ENCODE measurements at regions of chr7 and their contacts with region 1.

Region 1: DNA sequence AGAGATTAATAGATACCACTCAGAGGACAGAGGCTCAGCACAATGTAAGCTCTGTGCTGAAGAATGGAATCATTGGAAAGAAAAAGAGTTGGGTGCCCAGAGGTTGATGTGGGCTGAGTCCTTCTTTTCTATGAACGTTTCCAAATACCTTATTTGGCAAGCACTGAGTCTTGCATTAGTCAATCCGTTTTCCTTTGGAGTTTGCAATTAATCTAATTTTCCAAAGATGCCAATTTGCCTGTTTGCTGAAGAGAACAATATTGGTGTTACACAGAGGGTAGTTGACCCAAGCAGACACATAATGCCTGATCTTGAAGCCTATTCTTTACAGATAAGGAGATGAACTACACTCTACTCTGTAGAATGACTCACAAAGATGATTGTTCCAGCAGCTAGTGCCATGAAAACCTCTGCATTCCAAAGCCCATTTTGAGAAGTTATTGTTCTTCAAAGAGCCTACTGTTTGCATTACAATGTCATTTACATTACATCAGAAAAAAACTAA is 55.4 kb upstream of the MET start:
- DNase-seq: no peak
- ATAC-seq: peak; percentile 41; the same call in 1 of the 2 replicates
- H3K4me3 ChIP-seq: no peak overlapping the region
- H3K27ac ChIP-seq: no peak overlapping the region
- H3K4me1 ChIP-seq: no peaks in the 10 kb centered on the region; the same call in 1 of the 2 replicates
- H3K27me3 ChIP-seq: no peaks in the 10 kb centered on the region
- CTCF ChIP-seq: no peak

Region 2: GRCh38 chr7:116851671-116852070 is 235.1 kb after region 1 on chr7:
- CTCF ChIA-PET with region 1: no interaction called
- POLR2A ChIA-PET with region 1: interaction called, 12 read pairs
- in situ Hi-C with region 1: no loop called
- intact Hi-C with region 1: no loop called
- DNase-seq: no peak
- ATAC-seq: no peak
- H3K4me3 ChIP-seq: no peak overlapping the region
- H3K27ac ChIP-seq: no peak overlapping the region
- H3K4me1 ChIP-seq: no peaks in the 10 kb centered on the region
- H3K27me3 ChIP-seq: no peaks in the 10 kb centered on the region; the same call in 1 of the 2 replicates
- CTCF ChIP-seq: no peak

Region 3: DNA sequence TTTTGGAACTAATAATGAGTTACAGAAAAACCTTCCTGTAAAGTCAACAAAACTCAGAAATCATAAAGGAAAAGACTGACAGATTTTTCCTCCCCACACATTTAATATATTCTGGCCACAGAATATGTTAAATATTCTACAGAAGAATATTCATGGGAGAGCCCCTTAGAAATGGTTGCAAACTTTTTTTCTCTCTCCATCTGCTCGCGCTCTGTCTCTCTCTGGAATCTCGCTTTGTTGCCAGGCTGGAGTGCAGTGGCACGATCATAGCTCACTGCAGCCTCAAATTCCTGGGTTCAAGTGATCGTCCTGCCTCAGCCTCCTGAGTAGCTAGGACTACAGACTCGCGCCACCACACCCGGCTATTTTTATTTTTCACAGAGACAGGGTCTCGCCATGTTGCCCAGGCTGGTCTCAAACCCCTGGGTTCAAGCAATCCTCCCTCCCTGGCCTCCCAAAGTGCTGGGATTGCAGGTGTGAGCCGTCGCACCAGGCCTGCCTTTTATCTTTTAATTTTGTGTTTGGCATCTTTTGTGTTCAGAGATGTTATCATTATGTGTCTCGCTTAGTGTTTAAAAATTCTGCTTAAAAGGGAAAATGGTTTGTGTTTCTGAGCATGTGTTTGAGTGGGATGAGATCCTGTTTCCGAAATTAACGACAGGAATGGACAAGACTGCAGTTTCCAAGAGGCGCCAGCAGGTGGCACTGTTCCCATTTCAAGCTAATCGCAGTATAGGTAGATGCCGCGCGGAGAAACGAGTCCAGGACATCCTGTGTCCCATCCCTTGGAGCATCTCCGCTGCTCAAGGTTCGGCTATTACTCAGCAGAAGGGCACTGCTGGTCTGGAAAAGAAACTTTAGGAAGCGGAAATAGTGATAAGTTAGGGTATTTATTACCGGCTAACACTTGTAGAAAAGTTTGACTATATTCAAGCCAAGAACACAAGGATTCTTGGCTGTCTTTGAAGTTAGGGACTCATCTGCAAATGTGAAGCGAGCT is 313.6 kb after region 1 on chr7:
- CTCF ChIA-PET with region 1: no interaction called
- POLR2A ChIA-PET with region 1: no interaction called
- in situ Hi-C with region 1: no loop called
- intact Hi-C with region 1: no loop called
- DNase-seq: peak; percentile 79
- ATAC-seq: peak; percentile 95
- H3K4me3 ChIP-seq: peak overlapping the region in 1 of 2 experiments; percentile 25; a peak in 1 of 4 replicates
- H3K27ac ChIP-seq: no peak overlapping the region
- H3K4me1 ChIP-seq: 0 out of 2 replicates have a peak, but pooled peaks cover 2% of the 10 kb centered on the region
- H3K27me3 ChIP-seq: no peaks in the 10 kb centered on the region
- CTCF ChIP-seq: peak; percentile 93

Measured in Panc1 (cell line).